Heart left ventricle (tissue), 16 donors: ENCODE measurements at regions of chr13 and their contacts with region 1.

Region 1: DNA sequence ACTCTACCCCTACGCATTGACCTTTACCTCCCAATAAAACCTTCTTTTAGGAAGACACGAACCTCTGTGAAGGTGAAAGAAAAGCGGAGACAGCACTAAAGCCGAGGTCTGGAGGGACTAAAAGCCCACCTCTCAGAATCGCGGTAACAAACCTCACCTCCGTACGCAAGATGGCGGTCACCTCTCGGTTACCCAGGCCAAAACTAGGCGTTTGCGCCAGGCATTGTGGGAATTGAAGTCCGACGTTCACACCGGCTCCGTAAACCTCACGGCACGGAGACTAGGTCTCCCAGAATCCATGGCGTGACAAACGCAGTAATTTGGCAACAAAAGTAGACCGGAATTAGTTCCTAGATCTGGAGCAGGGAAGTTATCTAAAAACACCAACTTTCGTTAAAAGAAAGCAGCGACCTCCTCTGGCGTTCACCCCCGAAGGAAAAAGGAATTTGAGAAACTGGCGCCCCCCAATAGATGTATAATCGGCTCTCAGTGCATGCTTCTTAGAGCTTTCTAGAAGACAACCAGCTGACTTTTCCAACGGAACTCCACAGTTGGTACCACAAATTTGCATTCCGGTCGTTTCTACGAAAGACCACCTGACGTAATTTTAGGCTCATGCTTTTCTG is at the start of gene N4BP2L2:
- DNase-seq: peak; percentile 94 to 96 (median 96)
- ATAC-seq: peak; percentile 99
- H3K4me3 ChIP-seq: peak within 1 kb of the TSS; percentile 54 to 94 (median 76)
- H3K27ac ChIP-seq: peak within 1 kb of the TSS; percentile 85 to 99 (median 93)
- H3K4me1 ChIP-seq: peaks cover 5 to 48% (median 37%) of the 10 kb centered on the region in 12 donors
- H3K27me3 ChIP-seq: no peaks in the 10 kb centered on the region
- CTCF ChIP-seq: peak in 10 of 12 donors; percentile 13 to 62 (median 43)
- POLR2A ChIP-seq: peak in 1 of 2 donors; percentile 42
- total RNA-seq, gene N4BP2L2: 106 to 297 (median 142) TPM

Region 2: DNA sequence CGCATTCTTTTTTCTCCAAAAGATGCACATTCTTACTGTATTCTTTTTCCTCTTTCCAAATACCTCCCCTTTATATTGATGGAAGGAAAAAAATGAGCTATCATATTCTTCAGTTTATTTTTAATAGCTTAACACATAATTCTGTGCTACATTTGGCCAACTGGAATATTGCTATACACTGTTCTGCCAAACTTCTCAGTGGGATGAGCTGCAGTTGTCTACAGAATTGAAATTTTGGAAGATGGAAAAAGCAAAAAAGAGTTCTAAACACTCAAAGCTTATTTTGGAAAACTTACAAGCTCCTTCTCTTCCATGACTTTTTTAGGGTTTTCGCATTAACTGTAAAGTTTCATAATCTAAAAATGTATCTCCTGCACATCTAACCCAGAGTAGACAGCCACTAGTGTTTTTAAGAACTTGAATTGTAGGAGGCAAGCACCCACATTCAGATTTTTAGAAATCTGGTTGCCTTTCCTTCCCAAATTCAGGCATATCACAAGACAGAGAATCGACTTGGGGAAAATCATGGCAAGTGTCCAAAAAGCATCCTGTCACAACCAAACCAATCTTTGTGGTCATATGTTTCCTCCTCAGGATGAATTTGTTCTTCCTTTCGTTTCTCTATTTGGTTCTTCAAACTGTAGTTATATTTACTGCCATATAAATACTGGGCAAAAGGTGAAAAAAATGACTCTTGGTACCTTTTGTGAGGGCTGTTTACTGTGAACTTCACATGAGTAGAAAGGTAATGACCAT is 618.6 kb before region 1 on chr13:
- intact Hi-C with region 1: loop called in 1 of 10 experiments (anchors 5 kb)
- DNase-seq: no peak
- ATAC-seq: no peak
- H3K4me3 ChIP-seq: no peak overlapping the region
- H3K27ac ChIP-seq: peak overlapping the region in 5 of 12 donors; percentile 3 to 22 (median 10)
- H3K4me1 ChIP-seq: peaks cover 0 to 39% (median 19%) of the 10 kb centered on the region in 12 donors
- H3K27me3 ChIP-seq: no peaks in the 10 kb centered on the region
- CTCF ChIP-seq: no peak
- POLR2A ChIP-seq: no peak

Region 3: DNA sequence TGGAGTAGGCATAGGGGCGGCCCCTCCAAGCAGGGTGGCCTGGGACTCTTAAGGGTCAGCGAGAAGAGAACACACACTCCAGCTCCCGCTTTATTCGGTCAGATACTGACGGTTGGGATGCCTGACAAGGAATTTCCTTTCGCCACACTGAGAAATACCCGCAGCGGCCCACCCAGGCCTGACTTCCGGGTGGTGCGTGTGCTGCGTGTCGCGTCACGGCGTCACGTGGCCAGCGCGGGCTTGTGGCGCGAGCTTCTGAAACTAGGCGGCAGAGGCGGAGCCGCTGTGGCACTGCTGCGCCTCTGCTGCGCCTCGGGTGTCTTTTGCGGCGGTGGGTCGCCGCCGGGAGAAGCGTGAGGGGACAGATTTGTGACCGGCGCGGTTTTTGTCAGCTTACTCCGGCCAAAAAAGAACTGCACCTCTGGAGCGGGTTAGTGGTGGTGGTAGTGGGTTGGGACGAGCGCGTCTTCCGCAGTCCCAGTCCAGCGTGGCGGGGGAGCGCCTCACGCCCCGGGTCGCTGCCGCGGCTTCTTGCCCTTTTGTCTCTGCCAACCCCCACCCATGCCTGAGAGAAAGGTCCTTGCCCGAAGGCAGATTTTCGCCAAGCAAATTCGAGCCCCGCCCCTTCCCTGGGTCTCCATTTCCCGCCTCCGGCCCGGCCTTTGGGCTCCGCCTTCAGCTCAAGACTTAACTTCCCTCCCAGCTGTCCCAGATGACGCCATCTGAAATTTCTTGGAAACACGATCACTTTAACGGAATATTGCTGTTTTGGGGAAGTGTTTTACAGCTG is 223.3 kb before region 1 on chr13 and contains the starts of genes BRCA2 and ZAR1L:
- intact Hi-C with region 1: loop called in 1 of 10 experiments (anchors 5 kb)
- DNase-seq: peak; percentile 90 to 94 (median 91)
- ATAC-seq: peak; percentile 92 to 98 (median 98)
- H3K4me3 ChIP-seq: peak within 1 kb of the TSS; percentile 43 to 91 (median 79)
- H3K27ac ChIP-seq: peak within 1 kb of the TSS; percentile 74 to 99 (median 92)
- H3K4me1 ChIP-seq: peaks cover 0 to 29% (median 5%) of the 10 kb centered on the region in 12 donors
- H3K27me3 ChIP-seq: no peaks in the 10 kb centered on the region
- CTCF ChIP-seq: peak in 3 of 12 donors; percentile 13 to 18 (median 14)
- POLR2A ChIP-seq: peak in 1 of 2 donors; percentile 77
- total RNA-seq, gene BRCA2: 0.13 to 5.2 (median 0.42) TPM
- total RNA-seq, gene ZAR1L: not detected

Region 4: DNA sequence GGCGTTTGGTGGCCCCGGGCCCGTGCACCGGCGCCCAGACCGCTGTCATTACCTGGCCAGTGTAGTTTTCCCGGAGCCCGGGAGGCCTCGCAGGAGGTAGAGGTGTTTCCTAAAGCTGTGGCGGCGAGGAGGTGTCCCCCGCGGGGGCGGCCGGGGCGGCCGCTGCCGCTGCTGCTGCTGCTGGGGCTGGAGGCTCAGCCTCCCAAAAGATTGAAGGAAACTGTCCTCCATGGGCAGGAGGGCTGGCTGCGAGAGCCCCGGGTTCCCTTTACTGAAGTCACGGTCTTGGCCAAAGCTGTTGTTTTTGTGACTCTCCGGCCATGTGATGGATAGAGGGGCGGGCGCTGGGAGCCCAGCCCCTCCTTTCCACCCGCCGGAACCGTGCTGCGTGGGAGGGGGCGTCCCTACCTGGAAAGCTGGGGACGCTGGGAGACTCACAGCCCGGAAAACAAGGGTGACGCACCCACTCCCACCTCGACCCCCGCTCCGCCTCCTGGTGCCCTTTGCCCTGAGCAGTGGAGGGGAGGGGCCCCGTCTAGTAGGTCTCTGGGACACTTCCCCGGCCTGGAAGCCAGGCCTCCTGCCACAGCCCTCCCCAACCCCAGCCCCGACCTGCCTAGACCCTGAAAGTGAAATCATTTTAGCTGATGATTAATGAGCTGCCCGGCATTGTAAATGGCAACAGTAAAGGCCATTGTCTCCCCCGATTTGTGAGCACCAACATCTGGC is 110.7 kb before region 1 on chr13 and contains the start of gene N4BP2L1:
- intact Hi-C with region 1: loop called in 2 of 10 experiments (anchors 5 kb)
- DNase-seq: peak; percentile 72 to 85 (median 82)
- ATAC-seq: peak; percentile 75 to 88 (median 78)
- H3K4me3 ChIP-seq: peak within 1 kb of the TSS; percentile 65 to 95 (median 80)
- H3K27ac ChIP-seq: peak within 1 kb of the TSS; percentile 56 to 98 (median 88)
- H3K4me1 ChIP-seq: peaks cover 0 to 55% (median 17%) of the 10 kb centered on the region in 12 donors
- H3K27me3 ChIP-seq: no peaks in the 10 kb centered on the region
- CTCF ChIP-seq: no peak
- POLR2A ChIP-seq: peak in 1 of 2 donors; percentile 89
- total RNA-seq, gene N4BP2L1: 2.1 to 14.8 (median 4.5) TPM

Region 5: GRCh38 chr13:33348366-33348765 is 809.6 kb after region 1 on chr13:
- intact Hi-C with region 1: no loop called
- DNase-seq: no peak
- ATAC-seq: no peak
- H3K4me3 ChIP-seq: peak overlapping the region in 3 of 12 donors; percentile 81 to 91 (median 82)
- H3K27ac ChIP-seq: peak overlapping the region in 4 of 12 donors; percentile 30 to 95 (median 92)
- H3K4me1 ChIP-seq: peaks cover 0 to 51% (median 21%) of the 10 kb centered on the region in 12 donors
- H3K27me3 ChIP-seq: no peaks in the 10 kb centered on the region
- CTCF ChIP-seq: no peak
- POLR2A ChIP-seq: no peak